Naive thymus-derived CD4-positive, alpha-beta T cell (primary cell): ENCODE measurements at regions of chr1 and their contacts with region 1.

Region 1: GRCh38 chr1:203290261-203291089 is 14.8 kb upstream of the BTG2 start:
- DNase-seq: peak; percentile 95 to 98 (median 97)
- ATAC-seq: peak; percentile 76
- H3K4me3 ChIP-seq: peak overlapping the region; percentile 57
- H3K4me3 Mint-ChIP-seq: peak overlapping the region; percentile 75 to 89 (median 86)
- H3K27ac ChIP-seq: peak overlapping the region; percentile 98
- H3K27ac Mint-ChIP-seq: peak overlapping the region; percentile 97 to 100 (median 99)
- H3K4me1 ChIP-seq: peaks cover 54 to 58% of the 10 kb centered on the region in 2 donors
- H3K4me1 Mint-ChIP-seq: peaks cover 44 to 92% (median 86%) of the 10 kb centered on the region in 7 donors
- H3K27me3 ChIP-seq: no peaks in the 10 kb centered on the region
- H3K27me3 Mint-ChIP-seq: peaks cover 0 to 3% (median 0%) of the 10 kb centered on the region in 5 donors

Region 2: DNA sequence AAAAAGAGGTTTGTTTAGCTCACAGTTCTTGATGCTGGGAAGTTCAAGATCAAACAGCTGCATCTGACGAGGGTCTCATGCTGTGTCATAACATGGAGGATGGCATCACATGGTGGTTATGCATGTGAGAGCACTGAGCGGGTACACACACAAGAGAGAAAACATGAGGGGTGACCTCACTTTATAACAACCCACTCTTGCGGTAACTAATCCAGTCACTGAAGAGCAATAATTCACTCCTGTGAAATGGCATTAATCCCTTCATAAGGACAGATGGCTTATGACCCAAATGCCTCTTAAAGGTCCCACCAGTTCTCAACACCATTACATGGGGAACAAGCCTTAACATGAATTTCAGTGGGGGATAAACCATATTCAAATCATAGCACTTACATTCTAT is 37.8 kb before region 1 on chr1:
- CTCF ChIA-PET with region 1: no interaction called
- POLR2A ChIA-PET with region 1: no interaction called
- intact Hi-C with region 1: no loop called
- DNase-seq: no peak
- ATAC-seq: no peak
- H3K4me3 ChIP-seq: no peak overlapping the region
- H3K4me3 Mint-ChIP-seq: no peak overlapping the region
- H3K27ac ChIP-seq: no peak overlapping the region
- H3K27ac Mint-ChIP-seq: no peak overlapping the region
- H3K4me1 ChIP-seq: no peaks in the 10 kb centered on the region
- H3K4me1 Mint-ChIP-seq: no peaks in the 10 kb centered on the region
- H3K27me3 ChIP-seq: no peaks in the 10 kb centered on the region
- H3K27me3 Mint-ChIP-seq: peaks cover 27 to 59% (median 50%) of the 10 kb centered on the region in 5 donors

Region 3: DNA sequence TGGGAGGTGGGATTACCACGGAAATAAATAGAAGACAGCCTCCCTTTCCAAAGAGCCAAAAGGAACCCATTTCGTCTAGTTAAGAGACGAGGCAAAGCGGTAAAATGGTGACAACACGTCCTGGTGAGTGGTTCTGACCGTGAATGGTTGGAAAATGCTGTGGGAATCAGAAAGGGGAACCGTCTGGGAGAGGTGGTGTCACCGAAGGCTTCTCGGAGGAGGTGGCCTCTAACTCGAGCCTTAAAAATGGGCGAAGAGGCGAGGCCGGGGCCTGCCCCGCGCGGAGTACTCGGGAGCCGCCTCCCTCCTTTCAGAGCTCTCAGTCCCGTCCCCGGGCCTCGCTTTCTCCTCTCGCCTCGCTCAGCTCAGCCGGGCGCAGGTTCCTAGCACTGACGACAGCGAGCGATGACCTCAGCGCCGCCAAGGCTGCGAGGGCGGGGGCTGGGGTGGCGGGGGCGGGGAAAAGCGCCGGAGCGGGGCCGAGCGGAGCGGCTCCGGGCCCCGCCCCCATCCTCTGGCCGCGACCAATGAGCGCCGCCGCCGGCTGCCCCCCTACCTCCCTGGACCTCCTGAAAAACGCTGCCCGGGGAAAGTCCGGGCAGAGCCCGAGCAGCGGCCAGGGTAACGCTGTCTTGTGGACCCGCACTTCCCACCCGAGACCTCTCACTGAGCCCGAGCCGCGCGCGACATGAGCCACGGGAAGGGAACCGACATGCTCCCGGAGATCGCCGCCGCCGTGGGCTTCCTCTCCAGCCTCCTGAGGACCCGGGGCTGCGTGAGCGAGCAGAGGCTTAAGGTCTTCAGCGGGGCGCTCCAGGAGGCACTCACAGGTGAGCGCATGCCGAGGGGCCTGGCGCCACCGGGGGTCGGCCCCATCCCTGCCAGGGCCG is 14.7 kb after region 1 on chr1 and contains the start of gene BTG2:
- CTCF ChIA-PET with region 1: interaction called, 35 read pairs
- POLR2A ChIA-PET with region 1: interaction called, 1,812 read pairs
- intact Hi-C with region 1: loop called (anchors 1 kb)
- DNase-seq: peak; percentile 83 to 94 (median 89)
- ATAC-seq: peak; percentile 90
- H3K4me3 ChIP-seq: peak within 1 kb of the TSS; percentile 86
- H3K4me3 Mint-ChIP-seq: peak within 1 kb of the TSS; percentile 89 to 100 (median 96)
- H3K27ac ChIP-seq: peak within 1 kb of the TSS; percentile 100
- H3K27ac Mint-ChIP-seq: peak within 1 kb of the TSS; percentile 96 to 100 (median 99)
- H3K4me1 ChIP-seq: peaks cover 22 to 40% of the 10 kb centered on the region in 2 donors
- H3K4me1 Mint-ChIP-seq: peaks cover 54 to 65% (median 60%) of the 10 kb centered on the region in 7 donors
- H3K27me3 ChIP-seq: no peaks in the 10 kb centered on the region
- H3K27me3 Mint-ChIP-seq: no peaks in the 10 kb centered on the region
- total RNA-seq, gene BTG2: 141 to 654 (median 241) TPM